ENCODE measurements at regions of chr2 and their contacts with region 1.

Region 1: GRCh38 chr2:7924023-7924762 is 757.7 kb upstream of the ID2 start:
- DNase-seq: no peak
- H3K4me3 Mint-ChIP-seq: no peak overlapping the region
- H3K27ac Mint-ChIP-seq: no peak overlapping the region
- H3K4me1 Mint-ChIP-seq: no peaks in the 10 kb centered on the region
- H3K27me3 Mint-ChIP-seq: no peaks in the 10 kb centered on the region

Region 2: GRCh38 chr2:8030573-8031303 is 106.5 kb after region 1 on chr2:
- intact Hi-C with region 1: loop called (anchors 5 kb)
- DNase-seq: no peak
- H3K4me3 Mint-ChIP-seq: no peak overlapping the region
- H3K27ac Mint-ChIP-seq: no peak overlapping the region
- H3K4me1 Mint-ChIP-seq: peaks cover 6% of the 10 kb centered on the region
- H3K27me3 Mint-ChIP-seq: peaks cover 2% of the 10 kb centered on the region